Activated B cell treated with CpG ODN at 0.5 μM for 24 hours (primary cell): ENCODE measurements at regions of chr19 and their contacts with region 1.

Region 1: GRCh38 chr19:40285353-40286234 is 449 bp upstream of the AKT2 start:
- DNase-seq: peak; percentile 92
- ATAC-seq: peak; percentile 79
- H3K4me3 Mint-ChIP-seq: peak overlapping the region; percentile 82
- H3K27ac Mint-ChIP-seq: peak overlapping the region; percentile 96
- H3K4me1 Mint-ChIP-seq: peaks cover 56% of the 10 kb centered on the region
- H3K27me3 Mint-ChIP-seq: no peaks in the 10 kb centered on the region
- CTCF ChIP-seq: no peak

Region 2: GRCh38 chr19:39833464-39834286 is 451.9 kb before region 1 on chr19 and contains the start of gene DYRK1B:
- CTCF ChIA-PET with region 1: no interaction called
- POLR2A ChIA-PET with region 1: no interaction called
- intact Hi-C with region 1: loop called (anchors 2 kb)
- DNase-seq: peak; percentile 90
- ATAC-seq: peak; percentile 86
- H3K4me3 Mint-ChIP-seq: peak within 1 kb of the TSS; percentile 82
- H3K27ac Mint-ChIP-seq: peak within 1 kb of the TSS; percentile 87
- H3K4me1 Mint-ChIP-seq: peaks cover 33% of the 10 kb centered on the region
- H3K27me3 Mint-ChIP-seq: no peaks in the 10 kb centered on the region
- CTCF ChIP-seq: no peak
- total RNA-seq, gene DYRK1B: 16.9 and 17.2 TPM in 2 replicates

Region 3: GRCh38 chr19:40133491-40133890 is 152.1 kb before region 1 on chr19:
- CTCF ChIA-PET with region 1: no interaction called
- POLR2A ChIA-PET with region 1: no interaction called
- intact Hi-C with region 1: no loop called
- DNase-seq: no peak
- ATAC-seq: no peak
- H3K4me3 Mint-ChIP-seq: no peak overlapping the region
- H3K27ac Mint-ChIP-seq: no peak overlapping the region
- H3K4me1 Mint-ChIP-seq: no peaks in the 10 kb centered on the region
- H3K27me3 Mint-ChIP-seq: peaks cover 29% of the 10 kb centered on the region
- CTCF ChIP-seq: no peak

Region 4: GRCh38 chr19:40190891-40191835 is 94.4 kb before region 1 on chr19 and contains the start of gene MAP3K10:
- CTCF ChIA-PET with region 1: no interaction called
- POLR2A ChIA-PET with region 1: interaction called, 12 read pairs
- intact Hi-C with region 1: loop called (anchors 1 kb)
- DNase-seq: peak; percentile 83
- ATAC-seq: peak; percentile 89
- H3K4me3 Mint-ChIP-seq: peak within 1 kb of the TSS; percentile 90
- H3K27ac Mint-ChIP-seq: peak within 1 kb of the TSS; percentile 86
- H3K4me1 Mint-ChIP-seq: peaks cover 31% of the 10 kb centered on the region
- H3K27me3 Mint-ChIP-seq: no peaks in the 10 kb centered on the region
- CTCF ChIP-seq: no peak
- total RNA-seq, gene MAP3K10: 16.4 and 20.5 TPM in 2 replicates

Region 5: DNA sequence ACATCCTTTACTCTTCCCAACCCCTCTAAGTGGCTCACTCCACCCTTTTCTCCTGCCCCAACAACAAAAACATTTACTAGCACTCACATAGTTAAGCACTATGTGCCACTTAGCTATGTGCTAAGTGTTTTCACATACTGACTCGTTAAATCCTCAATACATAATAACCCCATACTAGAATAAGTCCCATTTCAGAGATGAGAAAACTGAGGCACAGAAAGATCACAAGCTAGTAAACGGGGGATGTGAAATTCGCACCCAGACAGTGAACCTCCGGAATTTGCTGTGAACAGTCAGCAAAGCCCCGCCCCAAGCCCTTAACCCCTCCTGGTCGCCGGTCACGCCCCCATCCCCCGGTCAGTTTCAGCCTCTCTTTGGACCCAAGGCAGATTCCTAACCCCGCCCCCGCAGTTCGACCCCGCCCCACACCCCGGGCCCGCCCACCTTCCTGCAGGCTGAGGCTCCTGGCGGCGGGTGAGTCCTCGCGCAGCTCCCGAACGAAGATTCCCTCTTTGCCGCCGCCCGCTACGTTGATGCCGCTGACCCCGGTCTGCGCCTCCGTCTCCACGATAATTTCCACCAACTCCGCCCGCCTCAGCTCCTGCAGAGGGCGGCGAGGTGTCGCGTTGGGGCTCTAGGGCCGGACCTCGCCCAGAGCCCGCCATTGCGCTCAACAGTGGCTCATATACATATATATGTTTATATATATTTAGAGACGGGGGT is 117.8 kb after region 1 on chr19:
- CTCF ChIA-PET with region 1: no interaction called
- POLR2A ChIA-PET with region 1: interaction called, 5 read pairs
- intact Hi-C with region 1: loop called (anchors 1 kb)
- DNase-seq: peak; percentile 86
- ATAC-seq: peak; percentile 81
- H3K4me3 Mint-ChIP-seq: peak overlapping the region; percentile 90
- H3K27ac Mint-ChIP-seq: peak overlapping the region; percentile 71
- H3K4me1 Mint-ChIP-seq: peaks cover 23% of the 10 kb centered on the region
- H3K27me3 Mint-ChIP-seq: peaks cover 3% of the 10 kb centered on the region
- CTCF ChIP-seq: no peak

Region 6: GRCh38 chr19:40489882-40490230 is 204.3 kb after region 1 on chr19:
- CTCF ChIA-PET with region 1: no interaction called
- POLR2A ChIA-PET with region 1: no interaction called
- intact Hi-C with region 1: no loop called
- DNase-seq: no peak
- ATAC-seq: no peak
- H3K4me3 Mint-ChIP-seq: no peak overlapping the region
- H3K27ac Mint-ChIP-seq: no peak overlapping the region
- H3K4me1 Mint-ChIP-seq: peaks cover 6% of the 10 kb centered on the region
- H3K27me3 Mint-ChIP-seq: peaks cover 18% of the 10 kb centered on the region
- CTCF ChIP-seq: no peak

Region 7: GRCh38 chr19:40570313-40571004 is 284.9 kb after region 1 on chr19:
- CTCF ChIA-PET with region 1: no interaction called
- POLR2A ChIA-PET with region 1: interaction called, 11 read pairs
- intact Hi-C with region 1: loop called (anchors 2 kb)
- DNase-seq: peak; percentile 98
- ATAC-seq: peak; percentile 95
- H3K4me3 Mint-ChIP-seq: peak overlapping the region; percentile 70
- H3K27ac Mint-ChIP-seq: peak overlapping the region; percentile 81
- H3K4me1 Mint-ChIP-seq: peaks cover 22% of the 10 kb centered on the region
- H3K27me3 Mint-ChIP-seq: peaks cover 13% of the 10 kb centered on the region
- CTCF ChIP-seq: no peak